GM12878 (cell line): ENCODE measurements at regions of chr3 and their contacts with region 1.

Region 1: GRCh38 chr3:17747174-17747889 is 4.9 kb upstream of the TBC1D5 start:
- DNase-seq: peak; percentile 73
- ATAC-seq: peak; percentile 75
- H3K4me3 ChIP-seq: peak overlapping the region; percentile 42; the same call in 1 of the 2 replicates
- H3K27ac ChIP-seq: peak overlapping the region; percentile 77
- H3K4me1 ChIP-seq: peaks cover 31% of the 10 kb centered on the region
- H3K27me3 ChIP-seq: no peaks in the 10 kb centered on the region
- CTCF ChIP-seq: no peak
- EP300 ChIP-seq: peak; percentile 60 to 89; a peak in 2 of 4 replicates
- POLR2A ChIP-seq: no peak
- RAD21 ChIP-seq: no peak

Region 2: DNA sequence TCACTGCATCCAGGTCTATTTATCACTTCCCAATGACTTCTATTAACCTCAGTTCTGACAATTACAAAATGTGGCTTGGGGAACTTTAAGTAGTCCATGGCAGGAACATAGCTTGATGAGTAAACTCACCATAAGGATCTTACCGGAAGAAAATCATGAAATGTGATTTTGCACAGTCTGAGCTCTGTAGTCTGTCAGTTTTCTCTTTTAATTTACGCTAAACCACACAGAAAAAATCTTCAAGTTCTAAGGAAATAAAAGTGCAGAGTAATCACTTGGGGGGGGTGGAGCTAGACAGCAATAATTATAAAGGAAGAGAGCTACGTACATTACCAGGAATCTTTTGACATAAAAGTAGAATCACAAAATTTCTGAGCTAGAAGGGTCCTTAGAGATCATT is 14.1 kb before region 1 on chr3:
- CTCF ChIA-PET with region 1: no interaction called
- POLR2A ChIA-PET with region 1: interaction called, 8 read pairs
- RAD21 ChIA-PET with region 1: interaction called, 7 read pairs
- SMC1A ChIA-PET with region 1: interaction called, 21 read pairs
- in situ Hi-C with region 1: no loop called
- intact Hi-C with region 1: no loop called
- DNase-seq: no peak
- ATAC-seq: no peak
- H3K4me3 ChIP-seq: no peak overlapping the region
- H3K27ac ChIP-seq: no peak overlapping the region
- H3K4me1 ChIP-seq: no peaks in the 10 kb centered on the region
- H3K27me3 ChIP-seq: no peaks in the 10 kb centered on the region
- CTCF ChIP-seq: no peak
- EP300 ChIP-seq: no peak
- POLR2A ChIP-seq: no peak
- RAD21 ChIP-seq: no peak

Region 3: DNA sequence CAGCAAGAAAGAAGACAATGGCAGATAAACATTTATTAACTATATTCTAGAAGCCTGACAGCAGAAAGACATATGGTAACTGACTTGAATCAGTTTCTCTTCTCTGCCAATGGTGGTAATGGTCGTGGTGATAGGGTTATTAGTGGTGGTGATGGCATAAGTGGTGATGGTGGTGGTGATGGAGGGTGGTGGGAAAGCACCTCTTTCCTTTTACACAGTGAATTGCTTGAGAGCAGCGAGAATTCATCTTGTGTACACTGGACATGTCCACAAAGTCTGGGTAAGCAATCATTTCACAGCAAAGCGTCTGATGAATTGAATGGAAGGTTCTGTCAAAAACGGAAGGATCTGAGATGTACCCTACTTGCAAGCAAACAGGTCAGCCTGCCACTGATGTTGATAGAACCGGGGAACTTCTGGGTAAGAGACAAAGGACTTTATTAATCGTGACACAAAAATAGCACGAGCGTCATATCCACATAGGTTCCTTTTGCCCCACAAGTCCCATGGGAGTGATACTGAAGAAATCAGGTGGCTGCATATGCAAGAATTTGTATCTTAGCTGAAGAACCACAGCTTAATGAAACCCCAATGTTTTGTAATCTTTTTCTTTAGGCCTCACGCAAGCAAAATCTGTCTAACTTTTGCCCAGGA is 18.6 kb after region 1 on chr3:
- CTCF ChIA-PET with region 1: no interaction called
- POLR2A ChIA-PET with region 1: interaction called, 4 read pairs
- RAD21 ChIA-PET with region 1: interaction called, 11 read pairs
- SMC1A ChIA-PET with region 1: interaction called, 7 read pairs
- in situ Hi-C with region 1: no loop called
- intact Hi-C with region 1: loop called (anchors 1 kb)
- DNase-seq: peak; percentile 60
- ATAC-seq: peak; percentile 91
- H3K4me3 ChIP-seq: no peak overlapping the region
- H3K27ac ChIP-seq: no peak overlapping the region
- H3K4me1 ChIP-seq: no peaks in the 10 kb centered on the region
- H3K27me3 ChIP-seq: no peaks in the 10 kb centered on the region
- CTCF ChIP-seq: no peak
- EP300 ChIP-seq: peak; percentile 77 to 88; a peak in 3 of 4 replicates
- POLR2A ChIP-seq: no peak
- RAD21 ChIP-seq: no peak